Heart left ventricle (tissue), 16 donors: ENCODE measurements at regions of chr14 and their contacts with region 1.

Region 1: GRCh38 chr14:20799892-20800544 is 2.6 kb downstream of the RNASE1 start:
- DNase-seq: peak; percentile 54 to 75 (median 67)
- ATAC-seq: peak; percentile 56 to 80 (median 66)
- H3K4me3 ChIP-seq: peak overlapping the region in 11 of 12 donors; percentile 8 to 83 (median 61)
- H3K27ac ChIP-seq: peak overlapping the region; percentile 62 to 93 (median 84)
- H3K4me1 ChIP-seq: peaks cover 0 to 64% (median 23%) of the 10 kb centered on the region in 12 donors
- H3K27me3 ChIP-seq: no peaks in the 10 kb centered on the region
- CTCF ChIP-seq: no peak
- POLR2A ChIP-seq: no peak

Region 2: DNA sequence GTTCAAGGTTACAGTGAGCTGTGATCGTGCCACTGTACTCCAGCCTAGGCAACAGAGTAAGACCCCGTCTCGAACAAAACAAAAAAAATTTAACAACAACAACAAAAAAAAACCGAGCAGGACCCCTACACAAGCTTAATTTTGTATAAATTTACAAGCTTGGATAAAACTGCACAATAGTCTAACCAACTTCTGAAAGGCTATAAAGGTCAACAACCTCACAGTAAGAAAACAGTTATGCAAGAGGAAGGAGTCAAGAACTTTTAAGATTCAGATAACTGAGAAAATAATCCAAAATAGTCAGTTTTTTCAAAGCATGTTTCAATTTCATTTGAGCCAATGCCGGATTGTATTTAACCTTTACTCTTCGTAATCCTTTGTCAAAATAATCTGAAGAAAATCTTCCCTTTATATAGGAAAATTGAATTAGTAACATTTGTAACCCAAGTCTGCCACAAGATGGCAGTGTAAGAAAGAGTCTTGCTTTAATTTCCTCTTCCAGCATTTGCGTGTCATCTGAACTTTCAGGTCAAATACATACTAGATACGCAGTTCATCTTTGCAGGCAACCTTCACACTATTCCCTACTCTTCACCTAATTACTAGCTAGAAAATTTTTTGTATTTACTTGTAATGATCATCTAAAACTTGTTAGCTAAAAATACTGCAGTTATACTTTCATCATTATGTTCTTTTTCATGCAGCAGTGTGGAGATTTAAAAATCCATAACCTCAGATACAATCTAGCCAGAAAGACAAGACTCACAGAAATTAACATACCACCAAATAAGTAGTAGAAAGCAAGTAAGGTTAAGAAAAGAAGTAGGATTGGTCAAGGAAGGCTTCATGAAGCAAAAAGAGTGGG is 472.8 kb before region 1 on chr14:
- intact Hi-C with region 1: no loop called
- DNase-seq: peak in 1 of 5 donors; percentile 33
- ATAC-seq: peak in 2 of 4 donors; percentile 48 to 58
- H3K4me3 ChIP-seq: no peak overlapping the region
- H3K27ac ChIP-seq: peak overlapping the region in 3 of 12 donors; percentile 6 to 51 (median 40)
- H3K4me1 ChIP-seq: peaks cover 0 to 29% (median 13%) of the 10 kb centered on the region in 12 donors
- H3K27me3 ChIP-seq: no peaks in the 10 kb centered on the region
- CTCF ChIP-seq: peak; percentile 67 to 88 (median 80)
- POLR2A ChIP-seq: no peak

Region 3: DNA sequence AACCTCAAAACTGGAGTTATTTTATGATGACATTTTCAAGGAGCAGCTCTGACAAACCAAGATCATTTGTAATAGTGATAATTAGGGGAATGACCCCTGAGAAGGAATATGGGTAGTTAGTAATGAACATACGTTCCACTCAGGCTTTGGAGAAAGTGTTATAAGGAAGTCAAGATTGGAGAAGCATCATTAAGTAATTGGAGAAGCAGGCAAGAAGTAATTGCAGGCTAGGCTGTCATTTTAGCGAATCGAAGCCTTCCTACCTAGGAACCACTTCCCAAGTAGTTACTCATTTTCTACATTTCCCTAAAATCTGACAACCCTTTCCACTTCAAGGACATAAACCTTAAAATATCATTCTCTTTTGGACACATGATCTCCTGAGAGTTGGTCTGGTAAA is 30.6 kb before region 1 on chr14:
- intact Hi-C with region 1: loop called in 1 of 10 experiments (anchors 5 kb)
- DNase-seq: no peak
- ATAC-seq: no peak
- H3K4me3 ChIP-seq: no peak overlapping the region
- H3K27ac ChIP-seq: no peak overlapping the region
- H3K4me1 ChIP-seq: no peaks in the 10 kb centered on the region
- H3K27me3 ChIP-seq: no peaks in the 10 kb centered on the region
- CTCF ChIP-seq: no peak
- POLR2A ChIP-seq: no peak